IMR-90 (cell line): ENCODE measurements at regions of chr10 and their contacts with region 1.

Region 1: DNA sequence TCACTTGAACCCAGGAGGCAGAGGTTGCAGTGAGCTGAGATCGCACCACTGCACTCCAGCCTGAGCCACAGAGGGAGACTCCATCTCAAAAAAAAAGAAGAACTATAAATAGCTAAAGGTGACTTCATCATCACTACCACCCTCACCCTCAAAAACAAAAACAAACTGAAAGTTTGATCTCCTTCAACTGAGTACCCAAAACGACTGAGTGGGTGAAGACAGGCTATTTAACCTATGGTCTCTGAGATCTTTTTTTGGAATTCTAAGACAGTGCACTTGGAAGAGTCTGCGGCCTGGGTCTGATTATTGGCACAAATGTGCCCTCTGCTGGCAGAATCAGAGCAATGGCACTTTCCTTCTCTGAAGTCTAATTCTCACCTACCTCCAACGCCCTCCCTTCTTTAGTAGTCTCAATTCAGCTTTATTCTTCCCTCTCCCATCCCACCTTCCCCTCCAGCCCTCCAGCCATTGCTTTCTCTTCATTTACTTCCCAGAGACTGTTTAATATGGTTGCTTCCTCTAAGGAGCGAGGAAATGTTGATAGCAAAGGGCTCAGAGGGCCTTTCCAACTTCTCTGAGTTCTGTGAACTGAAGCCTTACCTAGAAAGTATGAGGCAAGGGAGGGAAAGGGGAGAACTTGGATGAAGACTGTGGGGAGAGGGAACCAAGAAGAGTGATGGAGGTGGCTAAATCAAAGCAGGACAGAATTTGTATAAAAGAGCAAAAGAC is 2.9 kb upstream of the MYOZ1 start:
- DNase-seq: peak; percentile 73
- ATAC-seq: peak; percentile 86
- H3K4me3 ChIP-seq: no peak overlapping the region
- H3K27ac ChIP-seq: no peak overlapping the region
- H3K4me1 ChIP-seq: peaks cover 9% of the 10 kb centered on the region
- H3K27me3 ChIP-seq: peaks cover 4% of the 10 kb centered on the region; the same call in 1 of the 2 replicates
- CTCF ChIP-seq: peak; percentile 90
- POLR2A ChIP-seq: 0 out of 2 replicates have a peak, but pooled peaks have one; percentile 34
- RAD21 ChIP-seq: peak; percentile 96

Region 2: DNA sequence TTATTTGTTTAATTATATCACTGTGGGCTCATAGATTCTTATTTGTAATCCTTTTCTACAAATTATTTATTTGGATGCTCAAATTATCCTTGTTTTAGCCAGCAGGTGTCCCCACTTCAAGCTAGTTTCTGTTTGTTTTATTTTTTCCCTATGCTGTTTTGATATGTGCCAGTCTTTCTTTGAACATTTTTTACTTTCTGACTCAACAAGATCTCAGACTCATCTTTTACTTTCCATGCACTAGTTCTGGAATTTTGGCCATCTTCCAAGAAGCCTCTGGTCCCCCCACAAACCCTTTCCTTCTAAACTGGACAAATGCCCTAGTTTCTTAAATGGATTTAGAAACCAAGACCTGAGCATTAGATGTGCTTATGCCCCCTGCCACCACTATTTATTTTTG is 380.2 kb before region 1 on chr10:
- CTCF ChIA-PET with region 1: no interaction called
- POLR2A ChIA-PET with region 1: no interaction called
- dilution Hi-C with region 1: no loop called
- in situ Hi-C with region 1: loop called (anchors 25 kb)
- intact Hi-C with region 1: loop called (anchors 5 kb)
- DNase-seq: peak; percentile 36
- ATAC-seq: peak; percentile 29
- H3K4me3 ChIP-seq: no peak overlapping the region
- H3K27ac ChIP-seq: no peak overlapping the region
- H3K4me1 ChIP-seq: no peaks in the 10 kb centered on the region
- H3K27me3 ChIP-seq: peaks cover 11% of the 10 kb centered on the region
- CTCF ChIP-seq: peak; percentile 59
- POLR2A ChIP-seq: no peak
- RAD21 ChIP-seq: peak; percentile 44

Region 3: DNA sequence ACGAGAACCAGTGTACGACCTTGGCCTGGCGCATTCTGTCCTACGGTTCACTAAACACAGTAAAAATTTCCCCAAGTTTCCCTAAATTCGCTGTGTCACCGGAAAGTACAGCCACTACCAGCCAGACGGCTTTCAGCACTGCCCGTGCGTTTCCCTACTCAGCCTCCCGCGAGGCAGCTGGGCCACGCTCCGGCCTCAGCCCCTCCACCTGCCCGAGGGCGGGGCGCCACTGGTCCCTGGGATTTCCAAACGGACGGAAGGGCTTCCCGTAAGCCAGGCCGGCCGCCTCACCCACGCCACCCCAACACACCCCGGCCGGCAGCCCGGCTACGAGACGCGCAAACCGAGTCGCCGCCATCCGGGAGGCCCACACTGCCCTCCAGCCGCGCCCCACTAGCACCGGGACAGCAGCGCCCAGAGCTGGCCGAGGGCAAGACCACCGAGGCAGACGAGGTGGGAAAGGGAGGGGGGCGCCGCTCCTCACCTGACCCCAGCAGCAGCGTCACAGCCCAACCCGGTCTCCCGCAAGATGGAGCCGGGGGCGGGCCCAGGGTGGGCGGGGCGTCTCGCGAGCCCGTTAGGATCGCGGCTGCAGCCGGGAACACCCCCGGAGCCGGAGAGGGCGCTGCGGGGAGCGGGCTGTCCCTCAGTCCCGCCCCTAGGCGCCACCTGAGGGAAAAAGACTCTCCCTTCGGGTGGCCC is 230.5 kb before region 1 on chr10 and contains the start of gene ANXA7:
- CTCF ChIA-PET with region 1: no interaction called
- POLR2A ChIA-PET with region 1: no interaction called
- dilution Hi-C with region 1: no loop called
- in situ Hi-C with region 1: no loop called
- intact Hi-C with region 1: loop called (anchors 10 kb)
- DNase-seq: peak; percentile 75
- ATAC-seq: peak; percentile 99
- H3K4me3 ChIP-seq: peak within 1 kb of the TSS; percentile 85
- H3K27ac ChIP-seq: peak within 1 kb of the TSS; percentile 85
- H3K4me1 ChIP-seq: no peaks in the 10 kb centered on the region
- H3K27me3 ChIP-seq: no peaks in the 10 kb centered on the region
- CTCF ChIP-seq: peak; percentile 30
- POLR2A ChIP-seq: peak; percentile 81
- RAD21 ChIP-seq: no peak
- total RNA-seq, gene ANXA7: 102 and 120 TPM in 2 replicates

Region 4: GRCh38 chr10:73529089-73529832 is 114.9 kb before region 1 on chr10:
- CTCF ChIA-PET with region 1: interaction called, 7 read pairs
- POLR2A ChIA-PET with region 1: no interaction called
- dilution Hi-C with region 1: no loop called
- in situ Hi-C with region 1: loop called (anchors 5 kb)
- intact Hi-C with region 1: loop called (anchors 1 kb)
- DNase-seq: peak; percentile 81
- ATAC-seq: peak; percentile 96
- H3K4me3 ChIP-seq: no peak overlapping the region
- H3K27ac ChIP-seq: no peak overlapping the region
- H3K4me1 ChIP-seq: no peaks in the 10 kb centered on the region
- H3K27me3 ChIP-seq: no peaks in the 10 kb centered on the region
- CTCF ChIP-seq: peak; percentile 91
- POLR2A ChIP-seq: 0 out of 2 replicates have a peak, but pooled peaks have one; percentile 51
- RAD21 ChIP-seq: peak; percentile 95

Region 5: GRCh38 chr10:73609116-73609515 is 35.1 kb before region 1 on chr10:
- CTCF ChIA-PET with region 1: no interaction called
- POLR2A ChIA-PET with region 1: no interaction called
- dilution Hi-C with region 1: no loop called
- in situ Hi-C with region 1: no loop called
- intact Hi-C with region 1: no loop called
- DNase-seq: no peak
- ATAC-seq: no peak
- H3K4me3 ChIP-seq: no peak overlapping the region
- H3K27ac ChIP-seq: no peak overlapping the region
- H3K4me1 ChIP-seq: no peaks in the 10 kb centered on the region
- H3K27me3 ChIP-seq: no peaks in the 10 kb centered on the region
- CTCF ChIP-seq: no peak
- POLR2A ChIP-seq: no peak
- RAD21 ChIP-seq: no peak